CD8-positive, alpha-beta T cell (primary cell): ENCODE measurements at regions of chr11 and their contacts with region 1.

Region 1: GRCh38 chr11:96215110-96215782 is 127.7 kb downstream of the MAML2 start:
- DNase-seq: peak in 7 of 9 experiments; percentile 15 to 76 (median 46)
- ATAC-seq: peak; percentile 63
- H3K4me3 ChIP-seq: peak overlapping the region in 1 of 2 experiments; percentile 31
- H3K4me3 Mint-ChIP-seq: peak overlapping the region; percentile 67
- H3K27ac ChIP-seq: peak overlapping the region; percentile 58 to 89
- H3K27ac Mint-ChIP-seq: peak overlapping the region; percentile 95
- H3K4me1 ChIP-seq: peaks cover 99% of the 10 kb centered on the region
- H3K4me1 Mint-ChIP-seq: peaks cover 82% of the 10 kb centered on the region
- H3K27me3 ChIP-seq: no peaks in the 10 kb centered on the region
- H3K27me3 Mint-ChIP-seq: no peaks in the 10 kb centered on the region
- CTCF ChIP-seq: no peak

Region 2: DNA sequence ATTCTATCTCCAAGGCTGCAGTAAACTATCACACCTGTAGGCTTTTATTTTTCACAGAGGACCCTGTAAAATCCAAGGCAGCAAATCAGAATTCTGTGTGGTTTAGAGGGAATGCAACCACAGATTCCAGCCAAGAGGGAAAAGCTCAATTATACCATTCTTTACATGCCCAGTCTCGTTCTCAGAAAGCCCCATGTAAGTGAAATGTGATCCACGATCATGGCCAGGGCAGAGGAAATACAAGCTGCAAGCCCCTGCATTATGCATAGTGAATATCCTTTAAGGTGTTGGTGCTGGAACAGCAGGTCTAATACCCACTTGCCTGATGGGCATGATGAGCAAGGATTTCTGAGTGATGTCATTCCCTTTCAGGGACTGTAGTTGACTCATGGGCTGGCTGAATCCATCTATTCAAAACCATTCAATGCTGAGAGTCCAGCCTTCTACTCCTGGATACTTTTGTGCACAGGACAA is 92.6 kb before region 1 on chr11:
- CTCF ChIA-PET with region 1: no interaction called
- POLR2A ChIA-PET with region 1: no interaction called
- intact Hi-C with region 1: loop called in 1 of 2 experiments (anchors 5 kb)
- DNase-seq: no peak
- ATAC-seq: no peak
- H3K4me3 ChIP-seq: no peak overlapping the region
- H3K4me3 Mint-ChIP-seq: no peak overlapping the region
- H3K27ac ChIP-seq: no peak overlapping the region
- H3K27ac Mint-ChIP-seq: peak overlapping the region; percentile 24
- H3K4me1 ChIP-seq: peaks cover 39% of the 10 kb centered on the region
- H3K4me1 Mint-ChIP-seq: peaks cover 65% of the 10 kb centered on the region
- H3K27me3 ChIP-seq: no peaks in the 10 kb centered on the region
- H3K27me3 Mint-ChIP-seq: no peaks in the 10 kb centered on the region
- CTCF ChIP-seq: no peak

Region 3: DNA sequence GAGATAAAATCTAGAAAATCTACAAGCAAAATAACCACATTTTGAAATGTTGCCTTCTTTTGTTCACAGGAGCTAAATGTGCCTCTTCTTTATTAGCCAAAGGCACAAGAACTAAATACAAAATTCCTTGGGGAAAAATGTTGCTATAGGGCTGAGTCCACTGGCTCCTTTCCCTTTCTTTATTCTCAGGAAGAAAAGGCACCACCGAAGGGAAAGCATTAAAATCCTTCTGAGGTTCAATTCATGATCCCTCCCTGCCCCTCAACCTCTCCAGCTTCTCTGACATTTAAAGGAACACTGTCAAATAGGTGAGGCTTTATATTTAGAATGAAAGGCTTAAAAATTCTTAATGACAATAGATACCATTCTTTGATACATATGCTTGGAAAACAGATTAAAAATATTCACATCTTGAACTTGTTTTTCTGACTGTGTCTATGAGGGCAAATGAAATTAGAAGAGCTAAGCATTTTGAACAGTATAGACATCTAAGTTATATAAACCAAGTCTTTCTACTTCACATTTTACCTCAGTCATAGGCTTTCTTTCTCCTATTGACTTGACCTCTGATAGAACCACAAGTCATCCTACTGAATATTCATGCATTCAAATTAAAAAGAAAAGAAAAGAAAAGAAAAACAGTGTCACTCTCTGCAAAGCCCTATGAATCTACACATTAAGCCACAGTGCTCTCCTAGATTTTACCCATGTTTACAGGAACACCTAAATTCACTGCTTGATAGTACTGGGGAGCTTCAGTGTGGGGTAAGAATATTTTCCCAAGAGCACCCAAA is 20.5 kb before region 1 on chr11:
- CTCF ChIA-PET with region 1: no interaction called
- POLR2A ChIA-PET with region 1: no interaction called
- intact Hi-C with region 1: no loop called
- DNase-seq: no peak
- ATAC-seq: no peak
- H3K4me3 ChIP-seq: no peak overlapping the region
- H3K4me3 Mint-ChIP-seq: peak overlapping the region; percentile 55
- H3K27ac ChIP-seq: peak overlapping the region in 1 of 2 experiments; percentile 21
- H3K27ac Mint-ChIP-seq: peak overlapping the region; percentile 85
- H3K4me1 ChIP-seq: peaks cover 58% of the 10 kb centered on the region
- H3K4me1 Mint-ChIP-seq: peaks cover 87% of the 10 kb centered on the region
- H3K27me3 ChIP-seq: no peaks in the 10 kb centered on the region
- H3K27me3 Mint-ChIP-seq: no peaks in the 10 kb centered on the region
- CTCF ChIP-seq: no peak

Region 4: GRCh38 chr11:96486894-96487595 is 271.8 kb after region 1 on chr11:
- CTCF ChIA-PET with region 1: no interaction called
- POLR2A ChIA-PET with region 1: no interaction called
- intact Hi-C with region 1: no loop called
- DNase-seq: no peak
- ATAC-seq: no peak
- H3K4me3 ChIP-seq: no peak overlapping the region
- H3K4me3 Mint-ChIP-seq: no peak overlapping the region
- H3K27ac ChIP-seq: no peak overlapping the region
- H3K27ac Mint-ChIP-seq: no peak overlapping the region
- H3K4me1 ChIP-seq: no peaks in the 10 kb centered on the region
- H3K4me1 Mint-ChIP-seq: no peaks in the 10 kb centered on the region
- H3K27me3 ChIP-seq: no peaks in the 10 kb centered on the region
- H3K27me3 Mint-ChIP-seq: peaks cover 24% of the 10 kb centered on the region
- CTCF ChIP-seq: no peak